Calu3 (cell line): ENCODE measurements at regions of chr3 and their contacts with region 1.

Region 1: GRCh38 chr3:87227104-87227834 is at the start of gene CHMP2B:
- DNase-seq: peak; percentile 88
- H3K4me3 Mint-ChIP-seq: peak within 1 kb of the TSS; percentile 96
- H3K27ac Mint-ChIP-seq: peak within 1 kb of the TSS; percentile 92
- H3K4me1 Mint-ChIP-seq: peaks cover 19% of the 10 kb centered on the region
- H3K27me3 Mint-ChIP-seq: no peaks in the 10 kb centered on the region
- CTCF ChIP-seq: no peak
- total RNA-seq, gene CHMP2B: 56.6 and 58.8 TPM in 2 replicates

Region 2: DNA sequence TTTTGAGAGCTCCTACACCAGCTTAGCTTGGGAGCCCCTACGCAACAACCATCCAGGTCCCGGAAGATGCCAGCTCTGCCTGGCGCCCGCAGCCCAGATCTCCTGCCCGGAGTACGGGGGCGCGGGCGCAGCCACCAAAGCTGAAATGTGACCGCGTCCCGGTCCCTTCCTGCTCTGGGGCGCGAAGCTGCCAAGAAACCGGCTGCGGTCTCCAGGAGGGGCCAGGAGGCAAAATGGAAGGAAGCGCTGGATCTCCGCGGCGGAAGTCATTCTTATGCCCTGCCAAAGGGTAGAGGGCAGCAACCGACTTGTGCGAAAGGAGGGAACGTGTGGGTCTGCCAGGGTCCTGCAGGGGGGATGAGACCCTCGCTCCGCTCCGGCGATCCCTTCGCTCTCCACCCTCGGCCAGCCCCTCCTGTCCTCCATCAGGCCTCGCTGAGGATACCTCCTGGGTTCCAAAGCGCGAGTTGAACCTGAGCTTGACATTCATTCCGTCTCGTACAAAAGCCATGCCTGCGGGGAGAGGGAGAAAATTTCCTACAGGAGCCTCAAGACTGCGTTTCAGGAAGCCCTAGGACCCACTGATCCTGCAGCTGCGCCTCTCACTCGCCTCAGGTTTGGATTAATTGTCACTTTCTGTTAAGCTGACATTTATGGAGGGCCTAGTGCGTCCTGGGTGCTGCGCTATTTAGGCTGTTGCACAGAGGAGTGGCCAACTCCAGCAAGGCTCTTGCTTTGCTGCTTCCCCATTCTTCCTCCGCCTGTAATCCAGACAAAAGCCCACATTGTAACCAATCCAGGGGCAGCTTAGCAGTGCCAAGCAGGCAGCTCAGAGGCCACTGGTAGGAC is 138.1 kb before region 1 on chr3:
- CTCF ChIA-PET with region 1: interaction called, 3 read pairs
- intact Hi-C with region 1: loop called (anchors 5 kb)
- DNase-seq: peak; percentile 70
- H3K4me3 Mint-ChIP-seq: peak overlapping the region; percentile 81
- H3K27ac Mint-ChIP-seq: peak overlapping the region; percentile 91
- H3K4me1 Mint-ChIP-seq: peaks cover 15% of the 10 kb centered on the region
- H3K27me3 Mint-ChIP-seq: no peaks in the 10 kb centered on the region
- CTCF ChIP-seq: no peak

Region 3: DNA sequence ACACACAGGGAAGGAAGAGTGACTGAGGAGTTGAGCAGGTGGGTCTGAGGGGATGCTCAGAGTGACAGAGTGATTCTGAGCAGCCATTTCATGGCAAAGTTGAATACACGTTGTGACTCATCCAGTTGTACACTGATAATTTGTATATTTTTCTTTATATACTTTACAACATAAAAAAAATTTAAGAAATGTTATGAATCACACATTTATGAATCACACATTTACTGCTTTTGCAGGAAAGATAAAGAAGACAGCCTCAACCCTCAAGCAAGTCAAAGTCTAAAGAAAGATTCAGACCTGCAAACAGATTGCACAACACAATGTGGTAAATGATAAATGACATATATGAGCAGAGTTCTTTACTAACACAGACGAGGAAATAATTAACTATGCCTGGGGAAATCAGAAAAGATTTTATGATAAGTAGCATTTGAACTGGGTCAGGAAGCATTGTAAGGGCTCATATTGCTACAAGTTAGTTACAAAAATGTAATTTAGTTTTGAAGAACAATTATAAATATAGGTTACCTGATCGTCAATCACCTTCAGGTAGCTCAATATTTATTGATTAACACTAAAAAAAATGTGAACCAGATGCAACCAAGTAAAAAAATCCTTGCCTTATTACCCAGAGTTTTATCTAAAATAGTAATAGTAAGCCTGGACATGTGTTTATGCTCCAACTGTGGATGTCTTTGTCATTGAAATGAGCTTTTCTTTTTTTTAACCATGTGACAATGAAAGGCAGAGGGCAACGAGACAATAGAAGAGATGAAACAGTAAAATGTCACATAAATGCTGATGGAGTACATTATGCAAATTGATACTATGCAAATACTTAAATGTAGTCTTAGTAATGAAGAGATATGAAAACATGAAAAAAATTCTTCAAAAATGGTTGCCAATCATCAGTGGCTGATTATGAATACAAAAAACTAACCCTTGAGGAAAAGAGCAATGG is 20.9 kb before region 1 on chr3:
- CTCF ChIA-PET with region 1: no interaction called
- intact Hi-C with region 1: loop called (anchors 2 kb)
- DNase-seq: no peak
- H3K4me3 Mint-ChIP-seq: peak overlapping the region; percentile 30
- H3K27ac Mint-ChIP-seq: peak overlapping the region; percentile 70
- H3K4me1 Mint-ChIP-seq: no peaks in the 10 kb centered on the region
- H3K27me3 Mint-ChIP-seq: no peaks in the 10 kb centered on the region
- CTCF ChIP-seq: no peak